Motor neuron (in vitro differentiated cells): ENCODE measurements at regions of chr1 and their contacts with region 1.

Region 1: GRCh38 chr1:98053471-98054366 is 132.9 kb upstream of the DPYD start:
- ATAC-seq: peak; percentile 87 to 99 (median 91)
- H3K4me3 ChIP-seq: peak overlapping the region; percentile 27 to 40 (median 38)
- H3K27ac ChIP-seq: peak overlapping the region; percentile 1
- H3K4me1 ChIP-seq: peaks cover 6 to 23% of the 10 kb centered on the region in 2 donors

Region 2: DNA sequence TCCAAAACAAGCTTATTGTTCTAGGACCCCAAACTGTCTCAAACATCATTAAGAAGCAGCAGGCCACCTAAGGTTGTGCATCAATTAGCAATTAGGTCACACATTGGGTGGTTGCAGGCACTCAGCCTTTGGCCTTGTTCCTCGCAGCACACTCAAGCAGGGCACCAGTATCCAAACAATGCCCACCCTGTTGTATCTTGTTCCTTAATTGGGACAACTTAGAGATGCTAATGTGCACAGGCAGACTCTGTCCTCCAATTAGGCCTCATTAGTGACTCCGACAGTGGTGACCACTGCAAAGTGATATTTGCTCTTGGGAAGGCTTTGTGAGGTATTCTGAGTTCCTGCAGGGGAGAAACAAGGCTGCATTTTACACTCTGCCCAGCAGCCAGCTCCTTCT is 1847.3 kb before region 1 on chr1:
- in situ Hi-C with region 1: loop called in 1 of 9 experiments (anchors 25 kb)
- ATAC-seq: no peak
- H3K4me3 ChIP-seq: no peak overlapping the region
- H3K27ac ChIP-seq: no peak overlapping the region
- H3K4me1 ChIP-seq: peaks cover 12 to 29% of the 10 kb centered on the region in 2 donors

Region 3: GRCh38 chr1:96236156-96236739 is 1817.5 kb before region 1 on chr1:
- in situ Hi-C with region 1: loop called in 1 of 9 experiments (anchors 10 kb)
- ATAC-seq: peak; percentile 22 to 56 (median 48)
- H3K4me3 ChIP-seq: no peak overlapping the region
- H3K27ac ChIP-seq: no peak overlapping the region
- H3K4me1 ChIP-seq: peaks cover 20 to 27% of the 10 kb centered on the region in 2 donors

Region 4: GRCh38 chr1:96966536-96967138 is 1087.1 kb before region 1 on chr1:
- in situ Hi-C with region 1: loop called in 1 of 9 experiments (anchors 25 kb)
- ATAC-seq: peak; percentile 69 to 81 (median 72)
- H3K4me3 ChIP-seq: no peak overlapping the region
- H3K27ac ChIP-seq: no peak overlapping the region
- H3K4me1 ChIP-seq: peaks cover 14 to 40% of the 10 kb centered on the region in 2 donors

Region 5: DNA sequence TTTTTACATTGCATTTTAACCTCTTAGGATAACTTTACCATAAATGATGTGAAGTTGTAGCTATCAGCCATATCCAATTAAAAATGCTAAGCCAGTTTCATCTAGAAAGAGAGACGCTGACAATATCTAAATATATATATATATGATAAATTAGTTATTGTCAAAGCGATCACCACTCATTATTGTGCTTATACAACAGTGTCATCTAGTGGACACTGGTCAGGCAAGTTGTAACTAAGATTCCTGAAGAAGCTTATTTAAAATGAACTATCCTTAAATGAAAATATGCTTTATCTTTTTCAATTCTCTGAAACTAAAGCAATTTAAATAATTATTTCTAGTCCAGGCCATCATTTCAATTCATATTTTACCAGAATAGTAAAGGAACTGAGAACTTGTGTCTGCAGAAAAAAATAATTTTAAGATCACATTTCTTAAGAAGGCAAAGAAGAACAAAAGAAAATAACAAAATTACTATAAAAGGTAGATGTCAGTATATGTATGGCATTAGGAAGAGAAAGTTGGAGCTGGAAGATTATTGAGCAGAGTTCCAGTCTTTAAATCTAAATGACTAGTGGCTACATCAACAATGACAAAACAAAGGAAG is 414.5 kb after region 1 on chr1:
- in situ Hi-C with region 1: loop called in 6 of 9 experiments (anchors 10 to 25 kb)
- ATAC-seq: peak in 4 of 8 experiments; percentile 28 to 46 (median 40)
- H3K4me3 ChIP-seq: no peak overlapping the region
- H3K27ac ChIP-seq: no peak overlapping the region
- H3K4me1 ChIP-seq: peaks cover 0 to 11% of the 10 kb centered on the region in 2 donors